ENCODE measurements at regions of chr7 and their contacts with region 1.

Region 1: GRCh38 chr7:37284805-37285231 is 163.8 kb downstream of the ELMO1 start:
- DNase-seq: peak; percentile 47
- H3K4me3 ChIP-seq: no peak overlapping the region
- H3K27ac ChIP-seq: no peak overlapping the region
- H3K4me1 ChIP-seq: peaks cover 36% of the 10 kb centered on the region
- CTCF ChIP-seq: peak; percentile 92

Region 2: DNA sequence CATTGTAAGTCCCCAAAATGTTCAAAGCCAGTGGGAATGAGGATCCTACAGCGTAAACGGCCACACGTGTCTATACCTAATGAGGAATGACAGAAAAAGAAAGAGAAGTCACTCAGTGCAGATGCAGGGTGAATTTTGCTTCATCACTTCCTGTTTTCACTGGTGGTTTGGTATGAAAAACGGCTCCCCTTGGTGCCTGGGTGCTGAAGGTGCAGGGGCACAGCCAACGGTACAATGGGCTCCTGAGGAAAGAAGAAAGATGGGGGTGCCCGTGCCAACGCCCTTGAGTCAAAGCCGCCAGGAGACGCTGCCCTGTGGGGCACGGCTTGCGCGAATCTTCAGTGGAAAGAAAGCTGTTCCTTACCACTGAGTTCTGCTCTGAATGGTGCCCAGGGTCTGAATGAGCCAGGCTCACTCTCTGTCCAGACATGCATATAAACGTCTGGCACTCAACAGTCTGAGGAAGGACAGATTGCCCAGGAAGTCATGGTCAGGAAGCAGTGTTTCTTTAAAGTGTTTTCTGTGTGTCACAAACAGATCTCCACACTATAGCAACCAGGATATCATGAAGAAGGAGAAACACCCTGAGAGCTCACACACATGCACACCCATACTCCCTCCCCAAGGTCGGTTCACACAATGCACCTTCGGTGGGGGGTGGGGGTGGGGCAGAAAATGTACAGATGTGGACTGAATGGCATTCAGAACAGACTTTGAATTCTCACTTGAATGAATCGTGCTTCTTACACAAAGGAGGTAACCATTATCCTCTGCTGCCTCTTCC is 58.1 kb after region 1 on chr7:
- CTCF ChIA-PET with region 1: no interaction called
- POLR2A ChIA-PET with region 1: interaction called, 7 read pairs
- intact Hi-C with region 1: loop called (anchors 2 kb)
- DNase-seq: peak; percentile 89
- H3K4me3 ChIP-seq: peak overlapping the region; percentile 89
- H3K27ac ChIP-seq: peak overlapping the region; percentile 94
- H3K4me1 ChIP-seq: peaks cover 60% of the 10 kb centered on the region
- CTCF ChIP-seq: peak; percentile 70

Region 3: DNA sequence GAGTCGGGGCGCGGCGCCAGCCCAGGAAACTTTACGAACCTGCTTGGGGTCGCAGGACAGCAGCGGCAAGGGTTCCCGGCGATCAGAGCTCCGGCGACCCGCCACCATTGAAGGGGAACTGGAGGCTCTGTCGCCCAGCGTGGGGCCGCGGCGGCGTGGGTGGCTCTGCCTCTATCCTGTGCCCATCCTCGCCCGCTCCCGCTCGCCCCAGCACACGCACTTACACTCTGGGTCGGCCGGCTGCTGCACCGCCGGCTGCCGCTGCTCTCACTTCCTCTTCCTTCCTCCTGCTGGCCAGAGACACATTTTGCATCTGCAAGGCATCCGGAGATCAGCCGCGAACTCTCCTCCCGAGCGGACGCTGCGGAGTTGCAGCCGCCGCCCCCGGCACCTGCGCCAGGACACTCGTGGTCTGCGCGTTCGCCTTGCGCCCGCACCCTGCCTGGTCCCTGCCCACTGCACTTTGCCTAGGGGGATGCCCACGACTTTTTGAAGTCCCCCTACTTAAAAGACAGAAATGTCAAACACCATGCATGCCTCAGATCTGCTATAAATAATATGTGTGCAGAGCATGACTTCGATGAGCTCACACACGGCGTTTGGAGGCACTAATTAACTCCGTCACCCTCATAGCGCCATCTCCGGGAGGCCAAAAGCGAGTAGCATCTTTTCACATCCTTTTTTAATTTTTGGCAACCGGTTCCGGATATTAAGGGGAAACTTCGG is 164.0 kb after region 1 on chr7 and contains the start of gene ELMO1:
- CTCF ChIA-PET with region 1: interaction called, 8 read pairs
- POLR2A ChIA-PET with region 1: no interaction called
- intact Hi-C with region 1: loop called (anchors 2 kb)
- DNase-seq: peak; percentile 89
- H3K4me3 ChIP-seq: peak within 1 kb of the TSS; percentile 67
- H3K27ac ChIP-seq: peak within 1 kb of the TSS; percentile 22
- H3K4me1 ChIP-seq: peaks cover 19% of the 10 kb centered on the region
- CTCF ChIP-seq: peak; percentile 67
- total RNA-seq, gene ELMO1: 102 and 103 TPM in 2 replicates

Region 4: GRCh38 chr7:37495574-37496184 is 210.9 kb after region 1 on chr7:
- CTCF ChIA-PET with region 1: no interaction called
- POLR2A ChIA-PET with region 1: no interaction called
- intact Hi-C with region 1: loop called (anchors 2 kb)
- DNase-seq: peak; percentile 29
- H3K4me3 ChIP-seq: no peak overlapping the region
- H3K27ac ChIP-seq: no peak overlapping the region
- H3K4me1 ChIP-seq: no peaks in the 10 kb centered on the region
- CTCF ChIP-seq: peak; percentile 82

Measured in OCI-LY7 (cell line).